SK-N-SH (cell line): ENCODE measurements at regions of chr7 and their contacts with region 1.

Region 1: GRCh38 chr7:97835296-97836138 is 36.7 kb downstream of the ASNS start:
- DNase-seq: peak; percentile 61
- H3K4me3 ChIP-seq: peak overlapping the region in 1 of 2 experiments; percentile 2; a peak in 1 of 4 replicates
- H3K27ac ChIP-seq: no peak overlapping the region
- H3K4me1 ChIP-seq: no peaks in the 10 kb centered on the region
- H3K27me3 ChIP-seq: peaks cover 32% of the 10 kb centered on the region
- CTCF ChIP-seq: peak; percentile 95
- EP300 ChIP-seq: no peak
- RAD21 ChIP-seq: peak; percentile 75

Region 2: DNA sequence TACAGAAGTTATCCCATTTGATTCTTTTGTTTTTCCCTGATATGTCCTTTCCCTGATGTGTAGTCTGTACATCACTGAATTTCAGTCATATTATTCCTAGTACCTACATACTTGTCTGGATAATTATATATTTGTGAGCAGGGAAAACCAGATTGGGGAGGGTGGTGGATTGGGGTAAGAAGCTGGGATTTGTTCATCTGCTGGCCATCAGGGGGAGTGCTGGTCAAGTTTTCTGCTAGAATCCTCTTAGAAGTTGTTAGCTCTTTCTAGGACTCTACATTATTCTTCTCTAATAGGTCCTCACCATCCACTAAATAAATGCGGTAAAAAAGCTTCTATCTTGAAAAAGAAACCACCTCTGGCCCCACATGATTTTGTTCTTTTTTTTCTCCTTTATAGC is 336.3 kb before region 1 on chr7:
- CTCF ChIA-PET with region 1: interaction called, 15 read pairs
- POLR2A ChIA-PET with region 1: no interaction called
- DNase-seq: peak; percentile 55
- H3K4me3 ChIP-seq: no peak overlapping the region
- H3K27ac ChIP-seq: no peak overlapping the region
- H3K4me1 ChIP-seq: no peaks in the 10 kb centered on the region
- H3K27me3 ChIP-seq: no peaks in the 10 kb centered on the region; the same call in 1 of the 2 replicates
- CTCF ChIP-seq: peak; percentile 72
- EP300 ChIP-seq: no peak
- RAD21 ChIP-seq: peak; percentile 70

Region 3: GRCh38 chr7:97819161-97819560 is 16.4 kb before region 1 on chr7:
- CTCF ChIA-PET with region 1: interaction called, 50 read pairs
- POLR2A ChIA-PET with region 1: no interaction called
- DNase-seq: no peak
- H3K4me3 ChIP-seq: no peak overlapping the region
- H3K27ac ChIP-seq: no peak overlapping the region
- H3K4me1 ChIP-seq: no peaks in the 10 kb centered on the region
- H3K27me3 ChIP-seq: peaks cover 5% of the 10 kb centered on the region; the same call in 1 of the 2 replicates
- CTCF ChIP-seq: no peak; the same call in 1 of the 2 replicates
- EP300 ChIP-seq: no peak
- RAD21 ChIP-seq: no peak

Region 4: DNA sequence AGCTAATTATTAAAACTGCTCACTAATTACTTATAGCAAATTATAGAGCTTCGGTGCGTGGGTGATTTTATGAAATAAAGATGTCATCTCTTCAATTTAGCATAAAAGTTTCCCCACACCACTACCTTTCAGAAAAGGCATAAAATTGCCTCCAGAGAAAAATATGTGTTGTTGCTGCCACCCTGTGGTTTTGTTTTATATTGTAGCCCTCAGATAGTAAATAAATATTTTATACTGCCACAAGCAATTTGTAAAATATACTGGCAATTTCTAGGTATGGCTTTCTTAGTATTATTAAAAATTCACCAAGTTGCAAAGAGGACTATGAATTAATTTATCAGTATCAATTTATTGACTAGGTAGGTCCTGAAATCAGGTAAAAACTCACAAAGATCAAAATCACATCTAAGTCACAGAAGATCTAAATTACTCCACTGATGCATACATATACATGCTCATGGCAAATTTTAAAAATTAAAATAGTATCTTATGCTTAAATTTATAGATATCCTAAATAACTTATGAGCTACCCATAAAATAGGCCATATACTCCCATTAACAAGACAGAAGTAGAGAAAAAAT is 10.2 kb after region 1 on chr7:
- CTCF ChIA-PET with region 1: interaction called, 38 read pairs
- POLR2A ChIA-PET with region 1: no interaction called
- DNase-seq: peak; percentile 52
- H3K4me3 ChIP-seq: no peak overlapping the region
- H3K27ac ChIP-seq: no peak overlapping the region
- H3K4me1 ChIP-seq: no peaks in the 10 kb centered on the region
- H3K27me3 ChIP-seq: peaks cover 13% of the 10 kb centered on the region
- CTCF ChIP-seq: peak; percentile 75
- EP300 ChIP-seq: no peak
- RAD21 ChIP-seq: peak; percentile 72

Region 5: GRCh38 chr7:97857544-97857943 is 22.0 kb after region 1 on chr7:
- CTCF ChIA-PET with region 1: interaction called, 30 read pairs
- POLR2A ChIA-PET with region 1: no interaction called
- DNase-seq: no peak
- H3K4me3 ChIP-seq: no peak overlapping the region
- H3K27ac ChIP-seq: no peak overlapping the region
- H3K4me1 ChIP-seq: no peaks in the 10 kb centered on the region
- H3K27me3 ChIP-seq: no peaks in the 10 kb centered on the region
- CTCF ChIP-seq: no peak
- EP300 ChIP-seq: no peak
- RAD21 ChIP-seq: no peak

Region 6: DNA sequence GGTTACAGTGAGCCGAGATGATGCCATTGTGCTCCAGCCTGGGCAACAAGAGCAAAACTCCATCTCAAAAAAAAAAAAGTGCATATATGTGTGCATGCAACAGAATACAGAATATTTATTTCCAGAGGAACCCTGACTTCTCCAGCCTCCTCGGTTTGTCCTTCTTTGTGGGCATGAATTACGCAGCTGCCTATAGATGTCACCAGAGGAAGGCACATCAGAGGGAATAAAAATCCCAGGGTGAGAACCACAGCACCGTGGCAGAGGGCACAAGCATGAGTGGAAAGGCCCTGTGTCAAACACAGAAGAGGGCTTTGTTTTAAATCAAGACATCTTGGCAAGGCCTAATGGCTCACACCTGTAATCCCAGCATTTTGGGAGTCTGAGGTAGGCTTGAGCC is 178.8 kb after region 1 on chr7:
- CTCF ChIA-PET with region 1: interaction called, 12 read pairs
- POLR2A ChIA-PET with region 1: no interaction called
- DNase-seq: no peak
- H3K4me3 ChIP-seq: no peak overlapping the region
- H3K27ac ChIP-seq: no peak overlapping the region
- H3K4me1 ChIP-seq: no peaks in the 10 kb centered on the region
- H3K27me3 ChIP-seq: peaks cover 11% of the 10 kb centered on the region; the same call in 1 of the 2 replicates
- CTCF ChIP-seq: no peak
- EP300 ChIP-seq: no peak
- RAD21 ChIP-seq: peak; percentile 26; the same call in 1 of the 2 replicates